PC-3 (cell line): ENCODE measurements at regions of chr12 and their contacts with region 1.

Region 1: DNA sequence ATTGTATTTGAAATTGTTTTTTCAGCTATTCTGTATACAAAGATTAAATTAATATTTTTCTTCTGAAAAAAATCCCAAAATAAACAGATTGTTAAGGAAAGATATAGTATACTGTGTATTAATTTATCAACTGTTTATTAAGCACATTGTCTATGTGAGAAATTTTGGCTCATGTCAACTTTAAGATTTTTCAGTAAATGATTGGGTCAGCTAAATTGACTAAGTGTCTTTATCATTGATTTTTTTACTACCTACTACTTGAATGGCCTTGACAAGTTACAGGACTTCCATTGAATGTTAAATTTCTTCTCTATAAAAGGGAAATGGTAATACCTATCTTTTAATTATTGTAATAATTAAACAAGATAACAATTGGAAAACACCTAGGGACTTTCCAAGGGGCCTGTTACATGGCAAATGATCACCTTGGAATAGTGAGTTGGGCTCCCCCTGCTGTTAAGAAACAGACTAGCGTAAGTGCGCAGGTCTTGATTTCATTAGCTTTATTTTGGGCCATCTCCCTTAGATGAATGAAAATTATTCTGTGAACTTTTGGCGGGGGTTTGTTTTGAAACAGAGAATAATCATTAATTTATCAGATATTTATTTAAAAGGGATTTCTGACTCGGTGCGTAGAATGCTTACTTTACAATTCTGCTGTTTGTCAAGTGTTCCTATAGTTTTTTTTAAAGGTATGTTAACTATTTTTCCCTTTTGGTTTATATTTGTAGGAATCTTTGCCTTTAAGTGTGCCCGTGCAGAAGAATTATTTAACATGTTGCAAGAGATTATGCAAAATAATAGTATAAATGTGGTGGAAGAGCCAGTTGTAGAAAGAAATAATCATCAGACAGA is 14.5 kb upstream of the CCT2 start:
- DNase-seq: peak; percentile 83
- ATAC-seq: no peak
- H3K4me3 ChIP-seq: peak overlapping the region; percentile 52
- H3K27ac ChIP-seq: peak overlapping the region; percentile 90
- H3K4me1 ChIP-seq: peaks cover 30% of the 10 kb centered on the region
- H3K27me3 ChIP-seq: no peaks in the 10 kb centered on the region
- CTCF ChIP-seq: peak; percentile 88

Region 2: GRCh38 chr12:69388371-69388770 is 182.4 kb before region 1 on chr12:
- CTCF ChIA-PET with region 1: no interaction called
- POLR2A ChIA-PET with region 1: no interaction called
- intact Hi-C with region 1: loop called (anchors 2 kb)
- DNase-seq: peak; percentile 71
- ATAC-seq: peak; percentile 48; the same call in 1 of the 2 replicates
- H3K4me3 ChIP-seq: no peak overlapping the region
- H3K27ac ChIP-seq: no peak overlapping the region
- H3K4me1 ChIP-seq: 0 out of 2 replicates have a peak, but pooled peaks cover 7% of the 10 kb centered on the region
- H3K27me3 ChIP-seq: no peaks in the 10 kb centered on the region
- CTCF ChIP-seq: peak; percentile 76

Region 3: DNA sequence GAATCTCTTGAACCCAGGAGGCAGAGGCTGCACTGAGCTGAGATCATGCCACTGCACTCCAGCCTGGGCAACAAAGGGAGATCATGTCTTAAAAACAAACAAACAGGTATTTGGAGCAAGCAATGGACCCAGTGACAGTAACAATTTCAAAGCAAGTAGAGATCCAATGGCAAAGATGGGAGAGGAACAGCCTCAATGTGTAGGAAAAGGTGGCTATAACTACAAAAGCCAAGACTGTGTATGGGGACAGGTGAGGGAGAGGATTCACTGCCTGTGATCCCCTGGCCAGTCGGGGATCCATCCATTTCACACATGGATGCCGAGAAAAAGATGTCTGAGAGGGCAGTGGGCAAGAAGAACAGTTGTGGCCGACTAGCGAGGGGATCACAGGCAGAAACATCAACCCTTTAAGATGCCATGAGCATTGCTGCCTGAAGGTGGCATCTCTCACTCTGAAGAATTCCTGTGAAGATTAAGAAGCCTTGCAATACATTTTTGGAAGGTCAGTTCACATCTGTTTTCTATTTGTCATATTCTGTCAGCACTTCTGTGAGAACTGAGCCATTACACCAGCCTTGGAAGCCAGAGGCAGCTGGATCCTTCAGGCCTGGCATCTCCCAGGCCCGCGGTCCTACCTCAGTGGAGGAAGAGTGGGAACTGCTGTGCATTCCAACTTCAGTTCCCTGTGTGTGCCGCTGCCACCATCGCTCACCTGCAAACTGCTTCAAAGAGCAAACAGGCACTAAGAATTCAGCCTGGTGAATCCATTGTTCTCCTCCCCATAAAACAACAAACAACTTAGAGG is 155.1 kb before region 1 on chr12:
- CTCF ChIA-PET with region 1: no interaction called
- POLR2A ChIA-PET with region 1: no interaction called
- intact Hi-C with region 1: loop called (anchors 1 kb)
- DNase-seq: peak; percentile 75
- ATAC-seq: peak; percentile 92
- H3K4me3 ChIP-seq: no peak overlapping the region
- H3K27ac ChIP-seq: no peak overlapping the region
- H3K4me1 ChIP-seq: no peaks in the 10 kb centered on the region
- H3K27me3 ChIP-seq: no peaks in the 10 kb centered on the region
- CTCF ChIP-seq: peak; percentile 84

Region 4: DNA sequence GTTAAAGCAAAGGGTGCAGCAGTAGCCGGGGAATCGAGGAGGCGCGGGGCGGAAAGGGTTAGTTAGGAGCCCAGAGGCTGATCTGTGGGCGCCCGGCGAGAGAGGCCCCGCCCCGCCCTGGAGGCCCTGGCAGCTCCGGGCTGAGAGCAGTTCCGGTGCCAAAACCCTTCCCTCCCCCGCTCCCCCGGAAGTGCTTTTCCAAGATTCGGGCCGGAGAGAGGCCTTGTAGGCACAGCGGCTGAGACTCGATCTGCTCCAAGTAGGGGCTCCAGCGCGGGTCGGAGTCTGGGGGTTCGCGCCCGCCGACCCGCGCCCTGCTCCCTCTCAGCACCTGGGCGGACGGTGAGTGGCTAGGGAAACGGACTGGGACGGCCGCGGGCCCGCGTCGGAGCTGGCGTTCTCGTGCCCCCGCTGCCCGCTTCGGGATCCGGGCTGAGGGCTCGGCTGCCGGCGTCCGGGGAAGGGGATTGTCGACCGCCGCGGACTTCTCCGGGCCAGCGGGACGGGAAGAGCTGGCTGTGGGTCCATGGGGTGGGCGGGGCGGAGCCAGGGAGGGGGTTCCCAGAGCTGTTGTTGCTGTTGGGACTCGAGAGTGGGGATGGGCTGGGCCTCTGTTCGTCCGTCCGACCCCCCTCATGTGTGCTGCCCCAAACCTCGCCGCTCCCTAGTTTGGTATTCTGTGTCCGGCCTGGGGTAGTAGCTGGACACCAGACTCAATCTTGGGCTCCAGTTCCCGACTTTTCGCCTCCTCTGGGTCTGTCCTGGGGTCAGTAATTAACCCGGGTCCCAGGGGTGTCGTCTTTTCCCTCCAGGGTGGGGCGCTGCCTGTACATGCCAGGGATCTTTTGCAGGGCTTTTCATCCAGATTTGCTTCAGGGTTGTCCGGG is 100.3 kb before region 1 on chr12 and contains the start of gene FRS2:
- CTCF ChIA-PET with region 1: interaction called, 13 read pairs
- POLR2A ChIA-PET with region 1: no interaction called
- intact Hi-C with region 1: loop called (anchors 1 kb)
- DNase-seq: peak; percentile 88
- ATAC-seq: peak; percentile 95
- H3K4me3 ChIP-seq: peak within 1 kb of the TSS; percentile 90
- H3K27ac ChIP-seq: peak within 1 kb of the TSS; percentile 43
- H3K4me1 ChIP-seq: peaks cover 11% of the 10 kb centered on the region; the same call in 1 of the 2 replicates
- H3K27me3 ChIP-seq: no peaks in the 10 kb centered on the region
- CTCF ChIP-seq: peak; percentile 61
- total RNA-seq, gene FRS2: 17.6 and 35.0 TPM in 2 replicates

Region 5: DNA sequence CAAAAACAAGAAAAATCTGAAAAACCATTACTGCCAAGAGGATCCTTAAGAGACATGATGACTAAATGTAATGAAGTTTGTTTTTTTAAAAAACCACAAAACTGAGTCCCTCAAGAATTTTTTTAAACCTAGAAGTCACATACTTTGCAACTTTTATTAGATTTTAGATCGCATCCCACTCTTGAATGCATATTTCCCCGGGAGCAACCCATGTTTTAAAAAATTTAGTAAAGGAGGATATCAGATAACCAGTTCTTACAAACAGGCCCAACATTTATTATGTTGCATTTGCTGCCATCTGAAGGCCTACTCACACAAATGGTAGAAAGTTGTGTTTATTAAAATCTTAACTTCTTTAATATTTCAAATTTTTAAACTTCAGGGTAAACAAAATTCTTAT is 29.8 kb before region 1 on chr12:
- CTCF ChIA-PET with region 1: interaction called, 3 read pairs
- POLR2A ChIA-PET with region 1: interaction called, 3 read pairs
- intact Hi-C with region 1: loop called (anchors 2 kb)
- DNase-seq: peak; percentile 41
- ATAC-seq: peak; percentile 52
- H3K4me3 ChIP-seq: no peak overlapping the region
- H3K27ac ChIP-seq: no peak overlapping the region
- H3K4me1 ChIP-seq: peaks cover 19% of the 10 kb centered on the region; the same call in 1 of the 2 replicates
- H3K27me3 ChIP-seq: no peaks in the 10 kb centered on the region
- CTCF ChIP-seq: peak; percentile 40; the same call in 1 of the 2 replicates

Region 6: DNA sequence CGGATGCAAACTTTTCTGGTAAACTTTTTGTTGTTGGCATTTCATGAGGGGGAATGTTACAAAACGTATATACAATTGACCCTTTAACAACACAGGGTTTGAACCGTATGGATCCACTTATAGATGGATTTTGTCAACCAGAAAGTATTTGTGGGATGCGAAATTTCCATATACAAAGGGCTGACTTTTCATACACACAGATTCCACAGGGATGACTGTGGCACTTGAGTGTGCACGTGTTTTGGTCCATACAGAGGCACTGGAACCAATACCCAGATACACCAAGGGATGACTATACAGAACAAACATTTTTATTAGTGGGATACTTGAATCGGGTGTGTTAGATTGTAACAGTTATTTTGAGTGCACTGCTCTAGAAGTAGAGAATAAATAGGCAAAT is 15.3 kb before region 1 on chr12:
- CTCF ChIA-PET with region 1: no interaction called
- POLR2A ChIA-PET with region 1: no interaction called
- intact Hi-C with region 1: loop called (anchors 1 kb)
- DNase-seq: peak; percentile 87
- ATAC-seq: peak; percentile 97
- H3K4me3 ChIP-seq: no peak overlapping the region; the same call in 1 of the 2 replicates
- H3K27ac ChIP-seq: peak overlapping the region; percentile 58
- H3K4me1 ChIP-seq: peaks cover 33% of the 10 kb centered on the region
- H3K27me3 ChIP-seq: no peaks in the 10 kb centered on the region
- CTCF ChIP-seq: no peak